A673 (cell line): ENCODE measurements at regions of chrX and their contacts with region 1.

Region 1: DNA sequence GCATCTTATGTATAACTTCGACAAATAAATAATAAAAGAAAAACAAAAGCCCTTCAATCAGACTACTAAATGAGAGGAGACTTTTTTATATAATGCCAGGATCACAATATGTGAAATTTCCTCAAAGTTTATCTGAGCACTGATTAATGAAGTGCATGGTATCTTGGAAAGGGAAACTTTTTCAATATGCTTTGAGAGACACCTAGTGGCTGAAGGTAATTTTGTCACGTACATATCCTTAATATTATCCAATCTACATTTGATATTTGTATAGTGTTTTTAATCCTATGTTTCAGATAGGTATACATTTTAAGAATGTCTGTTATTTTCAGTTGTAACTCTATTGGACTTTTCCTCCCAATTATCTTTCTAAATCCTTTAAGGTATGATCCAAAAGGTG is 146.8 kb downstream of the KLHL4 start:
- DNase-seq: peak; percentile 18
- H3K4me3 ChIP-seq: no peak overlapping the region
- H3K27ac ChIP-seq: no peak overlapping the region
- H3K4me1 ChIP-seq: no peaks in the 10 kb centered on the region
- H3K27me3 ChIP-seq: no peaks in the 10 kb centered on the region
- CTCF ChIP-seq: peak; percentile 47; the same call in 1 of the 2 replicates

Region 2: GRCh38 chrX:86981326-86981869 is 683.0 kb before region 1 on chrX:
- CTCF ChIA-PET with region 1: no interaction called
- POLR2A ChIA-PET with region 1: no interaction called
- intact Hi-C with region 1: no loop called
- DNase-seq: no peak
- H3K4me3 ChIP-seq: no peak overlapping the region
- H3K27ac ChIP-seq: no peak overlapping the region
- H3K4me1 ChIP-seq: no peaks in the 10 kb centered on the region
- H3K27me3 ChIP-seq: no peaks in the 10 kb centered on the region
- CTCF ChIP-seq: no peak

Region 3: GRCh38 chrX:87338510-87338909 is 325.9 kb before region 1 on chrX:
- CTCF ChIA-PET with region 1: no interaction called
- POLR2A ChIA-PET with region 1: no interaction called
- intact Hi-C with region 1: loop called (anchors 5 kb)
- DNase-seq: peak; percentile 6
- H3K4me3 ChIP-seq: no peak overlapping the region
- H3K27ac ChIP-seq: no peak overlapping the region
- H3K4me1 ChIP-seq: no peaks in the 10 kb centered on the region
- H3K27me3 ChIP-seq: no peaks in the 10 kb centered on the region
- CTCF ChIP-seq: peak; percentile 30; the same call in 1 of the 2 replicates